ENCODE measurements at regions of chr15 and their contacts with region 1.

Region 1: GRCh38 chr15:52481915-52482314 is 46.8 kb downstream of the MYO5A start:
- DNase-seq: no peak
- H3K4me3 ChIP-seq: no peak overlapping the region
- H3K27ac ChIP-seq: no peak overlapping the region
- H3K4me1 ChIP-seq: peaks cover 0 to 6% of the 10 kb centered on the region in 2 donors
- H3K27me3 ChIP-seq: no peaks in the 10 kb centered on the region
- CTCF ChIP-seq: no peak
- POLR2A ChIP-seq: no peak

Region 2: GRCh38 chr15:53569751-53570480 is 1088.0 kb after region 1 on chr15:
- intact Hi-C with region 1: loop called (anchors 10 kb)
- DNase-seq: no peak
- H3K4me3 ChIP-seq: no peak overlapping the region
- H3K27ac ChIP-seq: no peak overlapping the region
- H3K4me1 ChIP-seq: no peaks in the 10 kb centered on the region
- H3K27me3 ChIP-seq: no peaks in the 10 kb centered on the region
- CTCF ChIP-seq: no peak
- POLR2A ChIP-seq: no peak

Region 3: GRCh38 chr15:54094661-54095060 is 1612.7 kb after region 1 on chr15:
- intact Hi-C with region 1: no loop called
- DNase-seq: no peak
- H3K4me3 ChIP-seq: no peak overlapping the region
- H3K27ac ChIP-seq: no peak overlapping the region
- H3K4me1 ChIP-seq: no peaks in the 10 kb centered on the region
- H3K27me3 ChIP-seq: no peaks in the 10 kb centered on the region
- CTCF ChIP-seq: no peak
- POLR2A ChIP-seq: no peak